ENCODE measurements at regions of chr20 and their contacts with region 1.

Region 1: GRCh38 chr20:46438156-46438750 is 31.8 kb upstream of the ELMO2 start:
- DNase-seq: peak in 1 of 2 experiments; percentile 3
- H3K4me3 ChIP-seq: no peak overlapping the region
- H3K27ac ChIP-seq: no peak overlapping the region
- H3K4me1 ChIP-seq: no peaks in the 10 kb centered on the region
- H3K27me3 ChIP-seq: no peaks in the 10 kb centered on the region
- CTCF ChIP-seq: peak in 2 of 3 experiments; percentile 52; a peak in 3 of 4 replicates
- EP300 ChIP-seq: no peak
- POLR2A ChIP-seq: no peak
- RAD21 ChIP-seq: peak; percentile 73 to 79

Region 2: DNA sequence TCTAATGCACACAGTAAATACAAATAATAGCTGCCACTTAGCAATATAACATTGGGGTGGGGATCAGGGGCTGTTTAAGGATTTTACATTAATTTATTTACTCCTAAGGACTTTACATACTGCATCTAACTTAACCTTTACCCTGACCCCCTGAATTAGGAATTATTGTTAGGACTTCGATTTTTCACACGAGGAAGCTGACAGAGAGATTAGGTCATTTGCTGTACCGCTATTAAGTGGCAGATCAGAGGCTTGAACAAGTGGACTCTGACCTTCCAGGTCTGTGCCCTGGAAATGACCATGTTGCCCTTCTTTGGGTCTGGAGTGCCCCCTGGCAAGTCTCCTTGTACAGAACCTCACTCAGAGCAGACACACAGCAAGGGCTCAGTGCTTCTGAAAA is 26.6 kb before region 1 on chr20:
- CTCF ChIA-PET with region 1: interaction called, 14 read pairs
- POLR2A ChIA-PET with region 1: no interaction called
- DNase-seq: no peak
- H3K4me3 ChIP-seq: no peak overlapping the region
- H3K27ac ChIP-seq: no peak overlapping the region
- H3K4me1 ChIP-seq: peaks cover 0 to 7% (median 2%) of the 10 kb centered on the region in 4 experiments; a peak in 4 of 7 replicates
- H3K27me3 ChIP-seq: peaks cover 0 to 5% (median 0%) of the 10 kb centered on the region in 4 experiments; a peak in 2 of 7 replicates
- CTCF ChIP-seq: no peak
- EP300 ChIP-seq: no peak
- POLR2A ChIP-seq: no peak
- RAD21 ChIP-seq: no peak

Region 3: DNA sequence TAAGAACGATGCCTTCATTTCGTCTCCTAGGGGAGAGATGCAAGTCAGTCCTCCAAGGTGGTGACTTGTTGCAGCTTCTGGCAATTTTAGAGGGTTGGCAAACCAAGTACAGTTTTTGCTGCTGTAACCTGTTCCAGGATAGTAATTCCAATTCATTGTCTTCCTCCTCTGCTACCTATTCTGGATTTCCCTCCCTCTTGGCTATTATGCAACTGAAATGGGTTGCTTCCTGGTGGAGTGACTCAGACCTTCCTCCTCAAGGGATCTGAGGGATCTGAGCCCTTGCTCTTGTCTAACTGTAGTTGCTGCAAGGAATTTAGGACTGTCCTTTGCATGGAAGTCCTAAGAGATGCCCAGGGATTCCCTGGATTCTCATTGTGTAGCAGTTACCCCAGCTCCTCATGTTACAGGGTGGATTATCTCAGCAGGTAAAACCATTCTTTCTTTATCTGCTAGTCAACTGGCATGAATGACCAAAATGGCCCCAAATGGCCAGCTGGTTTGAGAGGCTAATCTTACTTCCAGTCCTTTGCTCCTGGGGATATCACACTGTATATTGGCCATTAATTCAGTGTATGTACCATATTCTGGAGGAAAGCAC is 14.3 kb before region 1 on chr20:
- CTCF ChIA-PET with region 1: interaction called, 47 read pairs
- POLR2A ChIA-PET with region 1: interaction called, 4 read pairs
- DNase-seq: no peak
- H3K4me3 ChIP-seq: no peak overlapping the region
- H3K27ac ChIP-seq: no peak overlapping the region
- H3K4me1 ChIP-seq: peaks cover 5 to 17% (median 10%) of the 10 kb centered on the region in 4 experiments; a peak in 6 of 7 replicates
- H3K27me3 ChIP-seq: no peaks in the 10 kb centered on the region
- CTCF ChIP-seq: no peak
- EP300 ChIP-seq: no peak
- POLR2A ChIP-seq: no peak
- RAD21 ChIP-seq: no peak

Measured in H1 (cell line).